PC-9 (cell line): ENCODE measurements at regions of chr2 and their contacts with region 1.

Region 1: GRCh38 chr2:158006961-158007719 is 94.5 kb upstream of the UPP2 start:
- DNase-seq: no peak
- H3K4me3 ChIP-seq: no peak overlapping the region
- H3K27ac ChIP-seq: no peak overlapping the region
- H3K4me1 ChIP-seq: peaks cover 11% of the 10 kb centered on the region
- H3K27me3 ChIP-seq: no peaks in the 10 kb centered on the region
- CTCF ChIP-seq: no peak

Region 2: DNA sequence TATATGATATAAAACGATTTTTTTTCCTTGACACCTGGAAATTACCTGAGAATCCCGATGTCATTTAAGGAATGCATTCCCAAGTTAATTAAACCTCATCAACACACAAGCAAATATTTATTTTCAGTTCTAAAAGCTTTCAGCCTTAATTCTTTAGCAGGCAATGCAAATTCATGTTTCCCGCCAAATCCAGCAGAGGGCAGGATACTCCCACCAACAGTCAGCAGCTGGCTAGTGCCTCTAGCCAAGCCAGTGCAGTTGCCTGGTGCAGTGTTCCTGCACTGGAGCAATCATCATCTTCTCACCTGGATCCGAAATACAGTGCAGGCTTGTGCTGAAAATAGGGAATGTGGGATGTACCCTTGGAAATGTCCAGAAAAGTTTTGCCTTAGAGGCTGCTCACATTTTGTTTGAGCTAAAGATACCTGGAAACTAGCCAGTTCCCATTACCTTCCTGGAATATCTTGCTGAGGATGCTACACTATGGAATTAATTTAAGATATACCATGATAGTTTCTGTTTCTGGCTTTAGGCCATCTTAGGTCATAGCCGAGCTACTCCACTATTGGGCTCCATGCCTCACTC is 514.9 kb before region 1 on chr2:
- CTCF ChIA-PET with region 1: no interaction called
- POLR2A ChIA-PET with region 1: no interaction called
- intact Hi-C with region 1: loop called (anchors 1 kb)
- DNase-seq: peak in 1 of 2 experiments; percentile 41
- H3K4me3 ChIP-seq: no peak overlapping the region
- H3K27ac ChIP-seq: no peak overlapping the region
- H3K4me1 ChIP-seq: no peaks in the 10 kb centered on the region
- H3K27me3 ChIP-seq: no peaks in the 10 kb centered on the region
- CTCF ChIP-seq: peak; percentile 68

Region 3: GRCh38 chr2:159098374-159098773 is 1091.2 kb after region 1 on chr2:
- CTCF ChIA-PET with region 1: no interaction called
- POLR2A ChIA-PET with region 1: interaction called, 13 read pairs
- intact Hi-C with region 1: no loop called
- DNase-seq: peak in 1 of 2 experiments; percentile 49
- H3K4me3 ChIP-seq: peak overlapping the region; percentile 1; the same call in 1 of the 2 replicates
- H3K27ac ChIP-seq: peak overlapping the region; percentile 99
- H3K4me1 ChIP-seq: peaks cover 49% of the 10 kb centered on the region
- H3K27me3 ChIP-seq: no peaks in the 10 kb centered on the region
- CTCF ChIP-seq: no peak